Activated T-helper 2 cell treated with anti-CD3 and anti-CD28 coated beads, Interferon-gamma antibody, Interleukin-2, Interleukin-4, amounts not matched to agents 10 μg/mL and 5 μg/mL and 100 μg/mL, durations not matched to agents 14 hours and 24 hours and 36 hours (primary cell): ENCODE measurements at regions of chr6 and their contacts with region 1.

Region 1: GRCh38 chr6:11366183-11366933 is 133.9 kb upstream of the NEDD9 start:
- DNase-seq: peak; percentile 37
- H3K4me3 Mint-ChIP-seq: peak overlapping the region; percentile 34
- H3K27ac Mint-ChIP-seq: peak overlapping the region; percentile 67
- H3K4me1 Mint-ChIP-seq: peaks cover 88% of the 10 kb centered on the region
- H3K27me3 Mint-ChIP-seq: no peaks in the 10 kb centered on the region

Region 2: GRCh38 chr6:11277275-11278206 is 88.8 kb before region 1 on chr6:
- intact Hi-C with region 1: loop called (anchors 5 kb)
- DNase-seq: no peak
- H3K4me3 Mint-ChIP-seq: no peak overlapping the region
- H3K27ac Mint-ChIP-seq: peak overlapping the region; percentile 95
- H3K4me1 Mint-ChIP-seq: peaks cover 38% of the 10 kb centered on the region
- H3K27me3 Mint-ChIP-seq: no peaks in the 10 kb centered on the region

Region 3: DNA sequence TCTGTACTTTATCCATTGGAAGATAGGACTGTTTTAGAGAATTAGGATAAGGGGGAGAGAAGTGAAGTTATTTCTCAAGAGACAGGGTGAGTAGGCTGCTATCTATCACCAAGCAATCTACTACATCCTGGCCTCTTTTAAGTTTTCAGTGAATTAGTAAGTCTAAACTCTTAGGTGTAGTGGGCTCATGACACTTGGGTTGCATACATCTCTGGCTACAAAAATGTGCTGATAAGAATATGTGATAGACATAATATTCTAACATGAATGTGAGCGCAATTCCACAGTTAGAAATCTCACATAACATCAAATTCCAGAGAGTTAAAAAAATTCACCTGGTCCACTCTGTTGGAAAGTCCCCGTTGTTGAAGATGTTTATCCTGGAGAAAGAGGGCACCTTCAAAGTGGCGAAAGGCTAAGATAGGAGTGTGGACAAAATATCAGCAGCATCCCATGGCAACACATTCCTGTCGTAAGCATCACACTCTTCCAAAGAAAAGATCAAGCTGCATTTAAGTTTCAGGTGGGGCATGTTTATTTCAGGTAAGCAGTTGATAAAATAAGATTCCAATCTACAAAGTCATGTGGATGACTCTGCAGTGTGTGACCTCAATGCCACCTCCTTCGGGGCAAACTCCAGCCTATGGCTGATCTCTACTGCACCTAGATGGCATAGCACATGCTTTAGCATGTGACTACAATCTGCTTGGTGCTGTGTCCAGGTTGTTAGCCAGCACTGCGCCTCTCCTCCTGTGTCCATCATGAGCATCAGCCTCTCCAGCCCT is 22.2 kb before region 1 on chr6:
- intact Hi-C with region 1: loop called (anchors 1 kb)
- DNase-seq: no peak
- H3K4me3 Mint-ChIP-seq: no peak overlapping the region
- H3K27ac Mint-ChIP-seq: peak overlapping the region; percentile 61
- H3K4me1 Mint-ChIP-seq: peaks cover 68% of the 10 kb centered on the region
- H3K27me3 Mint-ChIP-seq: no peaks in the 10 kb centered on the region

Region 4: GRCh38 chr6:11381801-11382513 is 15.6 kb after region 1 on chr6:
- intact Hi-C with region 1: loop called (anchors 2 kb)
- DNase-seq: peak; percentile 71
- H3K4me3 Mint-ChIP-seq: peak overlapping the region; percentile 85
- H3K27ac Mint-ChIP-seq: peak overlapping the region; percentile 92
- H3K4me1 Mint-ChIP-seq: peaks cover 59% of the 10 kb centered on the region
- H3K27me3 Mint-ChIP-seq: no peaks in the 10 kb centered on the region

Region 5: GRCh38 chr6:11424395-11425050 is 58.2 kb after region 1 on chr6:
- intact Hi-C with region 1: loop called (anchors 2 kb)
- DNase-seq: no peak
- H3K4me3 Mint-ChIP-seq: no peak overlapping the region
- H3K27ac Mint-ChIP-seq: peak overlapping the region; percentile 43
- H3K4me1 Mint-ChIP-seq: peaks cover 53% of the 10 kb centered on the region
- H3K27me3 Mint-ChIP-seq: no peaks in the 10 kb centered on the region

Region 6: GRCh38 chr6:11496152-11497060 is 130.0 kb after region 1 on chr6:
- intact Hi-C with region 1: loop called (anchors 5 kb)
- DNase-seq: peak; percentile 55
- H3K4me3 Mint-ChIP-seq: no peak overlapping the region
- H3K27ac Mint-ChIP-seq: no peak overlapping the region
- H3K4me1 Mint-ChIP-seq: peaks cover 3% of the 10 kb centered on the region
- H3K27me3 Mint-ChIP-seq: no peaks in the 10 kb centered on the region